Esophagus squamous epithelium (tissue), 5 donors: ENCODE measurements at regions of chr3 and their contacts with region 1.

Region 1: DNA sequence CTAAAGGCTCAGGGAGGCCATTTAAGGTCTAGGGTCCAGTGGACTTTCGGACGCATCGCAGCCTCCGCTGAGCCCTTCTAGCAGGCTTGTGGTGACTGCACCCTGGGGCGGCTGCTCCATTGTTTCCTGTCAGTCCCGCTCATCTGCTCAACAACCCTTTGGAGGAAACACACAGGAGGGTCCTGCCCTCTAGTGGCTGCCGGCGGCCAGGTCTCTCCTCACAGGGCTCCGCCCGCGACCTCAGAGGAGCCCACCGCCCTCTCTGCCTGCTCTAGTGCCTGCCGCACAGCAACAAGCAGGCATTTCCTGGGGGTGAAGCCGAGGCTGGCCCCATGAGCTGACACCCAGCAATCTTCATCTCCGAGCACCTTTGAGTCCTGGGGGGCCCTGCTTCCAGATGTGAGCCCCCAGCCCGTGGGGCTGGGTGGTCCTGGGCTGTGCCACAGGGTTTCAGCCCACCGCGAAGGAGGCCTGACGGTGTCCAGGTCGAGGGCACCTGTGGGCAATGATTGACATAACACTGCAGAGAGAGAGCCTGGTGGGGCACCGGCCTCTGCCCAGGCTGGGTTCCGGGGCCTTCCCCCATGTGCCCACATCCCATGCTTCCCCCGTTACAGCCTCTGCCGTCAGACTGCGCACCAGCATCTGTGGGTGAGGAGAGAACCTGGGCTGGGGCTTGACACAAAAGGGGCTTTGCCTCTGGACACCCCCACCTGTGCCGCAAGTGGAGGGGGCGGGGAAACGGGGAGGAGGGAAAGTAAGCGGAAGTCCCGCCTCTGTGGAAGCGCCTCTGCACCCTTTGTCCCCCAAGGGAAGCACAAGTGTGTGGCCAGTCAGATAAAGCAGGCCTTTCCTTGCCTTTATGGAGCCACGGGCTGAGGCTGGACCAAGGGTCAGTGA is 27.0 kb upstream of the SFMBT1 start:
- DNase-seq: peak; percentile 23
- H3K4me3 ChIP-seq: peak overlapping the region; percentile 67 to 78 (median 70)
- H3K27ac ChIP-seq: peak overlapping the region; percentile 62 to 82 (median 81)
- H3K4me1 ChIP-seq: peaks cover 7 to 22% (median 8%) of the 10 kb centered on the region in 3 donors
- H3K27me3 ChIP-seq: no peaks in the 10 kb centered on the region
- CTCF ChIP-seq: peak; percentile 90 to 95 (median 92)
- POLR2A ChIP-seq: no peak

Region 2: GRCh38 chr3:52570076-52570475 is 502.8 kb before region 1 on chr3:
- intact Hi-C with region 1: no loop called
- DNase-seq: no peak
- H3K4me3 ChIP-seq: no peak overlapping the region
- H3K27ac ChIP-seq: no peak overlapping the region
- H3K4me1 ChIP-seq: no peaks in the 10 kb centered on the region
- H3K27me3 ChIP-seq: no peaks in the 10 kb centered on the region
- CTCF ChIP-seq: no peak
- POLR2A ChIP-seq: no peak

Region 3: DNA sequence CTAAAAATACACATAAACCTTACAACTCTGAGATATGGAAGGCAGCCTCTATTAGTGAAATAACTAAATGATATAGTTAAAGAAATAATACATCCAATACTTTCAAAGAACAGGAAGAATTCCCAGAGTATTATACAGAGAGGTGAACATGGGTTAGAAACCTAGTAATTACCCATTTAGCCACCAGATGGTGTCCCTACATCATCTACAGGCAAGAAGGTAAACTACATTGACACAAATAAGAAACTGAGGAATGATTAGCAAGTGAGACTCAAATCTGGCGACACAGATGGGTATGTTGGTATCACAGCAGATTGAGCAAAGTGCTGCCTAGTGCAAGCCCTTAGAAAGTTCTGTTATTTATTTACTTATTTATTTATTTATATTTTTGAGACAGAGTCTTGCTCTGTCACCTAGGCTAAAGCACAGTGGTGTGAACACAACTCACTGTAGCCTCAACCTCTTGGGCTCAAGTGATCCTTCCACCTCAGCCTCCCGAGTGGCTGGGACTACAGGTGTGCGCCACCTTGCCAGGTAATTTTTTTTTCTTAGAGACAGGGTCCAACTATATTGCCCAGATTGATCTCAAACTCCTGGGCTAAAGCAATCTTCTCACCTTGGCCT is 330.4 kb before region 1 on chr3:
- intact Hi-C with region 1: loop called (anchors 10 kb)
- DNase-seq: no peak
- H3K4me3 ChIP-seq: no peak overlapping the region
- H3K27ac ChIP-seq: no peak overlapping the region
- H3K4me1 ChIP-seq: no peaks in the 10 kb centered on the region
- H3K27me3 ChIP-seq: no peaks in the 10 kb centered on the region
- CTCF ChIP-seq: peak; percentile 24 to 64 (median 48)
- POLR2A ChIP-seq: no peak